ENCODE measurements at regions of chr14 and their contacts with region 1.

Region 1: GRCh38 chr14:100709289-100710284 is 17.1 kb upstream of the DLK1 start:
- DNase-seq: peak; percentile 64 to 82 (median 74)
- H3K4me3 ChIP-seq: no peak overlapping the region
- H3K27ac ChIP-seq: peak overlapping the region; percentile 91 to 98
- H3K4me1 ChIP-seq: peaks cover 23% of the 10 kb centered on the region
- H3K27me3 ChIP-seq: no peaks in the 10 kb centered on the region
- CTCF ChIP-seq: peak in 2 of 3 donors; percentile 29 to 84
- EP300 ChIP-seq: no peak
- POLR2A ChIP-seq: peak; percentile 18

Region 2: DNA sequence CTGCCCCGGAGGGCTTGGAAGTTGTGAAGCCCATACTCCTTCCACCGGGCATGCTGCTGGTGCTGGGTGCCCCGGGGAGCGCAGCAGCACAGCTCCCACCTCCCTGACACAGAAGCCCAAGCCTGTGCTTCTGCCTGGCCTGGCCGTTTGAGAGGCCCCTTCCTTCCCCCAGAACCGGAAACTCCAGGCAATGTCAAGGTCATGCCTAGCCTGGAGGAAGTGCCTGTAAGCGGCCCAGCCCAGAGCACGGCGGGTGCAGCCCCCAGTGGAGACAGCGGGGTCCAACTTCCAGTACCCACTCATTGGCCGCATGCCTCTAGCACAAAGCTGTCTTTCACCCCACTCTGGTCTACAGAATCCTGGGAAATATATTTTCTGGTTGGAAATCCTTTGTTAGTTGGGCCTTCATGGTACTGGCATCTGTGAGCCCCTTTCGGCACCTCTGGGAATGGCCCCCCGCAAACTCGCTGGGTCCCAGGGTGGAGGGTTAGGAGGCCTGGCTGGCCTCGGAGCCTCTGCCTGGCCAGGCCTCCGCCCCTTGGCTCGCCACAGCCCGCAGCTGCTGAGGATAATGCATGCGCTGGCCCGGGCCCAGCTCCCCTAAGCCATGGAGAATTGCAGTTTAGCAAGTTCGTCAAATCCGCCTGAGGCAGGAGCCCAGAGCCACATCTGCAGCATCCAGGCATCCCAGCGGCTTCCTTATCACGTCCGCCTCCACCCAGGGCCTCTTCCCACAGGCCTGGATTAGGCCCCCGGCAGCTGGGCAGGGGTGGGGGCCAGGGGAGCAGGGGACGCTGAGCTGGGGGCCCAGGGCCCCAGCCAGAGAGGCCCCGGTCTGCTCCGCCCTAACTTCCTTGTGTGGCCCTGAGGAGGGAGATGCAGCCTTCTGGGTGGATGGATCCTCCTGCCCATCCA is 31.8 kb before region 1 on chr14:
- intact Hi-C with region 1: loop called in 1 of 4 experiments (anchors 2 kb)
- DNase-seq: peak; percentile 83 to 90 (median 84)
- H3K4me3 ChIP-seq: no peak overlapping the region
- H3K27ac ChIP-seq: peak overlapping the region; percentile 75 to 92
- H3K4me1 ChIP-seq: peaks cover 32% of the 10 kb centered on the region
- H3K27me3 ChIP-seq: no peaks in the 10 kb centered on the region
- CTCF ChIP-seq: no peak
- EP300 ChIP-seq: no peak
- POLR2A ChIP-seq: peak; percentile 23

Region 3: GRCh38 chr14:100736234-100737180 is 26.9 kb after region 1 on chr14:
- intact Hi-C with region 1: no loop called
- DNase-seq: peak in 3 of 5 donors; percentile 12 to 59 (median 36)
- H3K4me3 ChIP-seq: no peak overlapping the region
- H3K27ac ChIP-seq: no peak overlapping the region
- H3K4me1 ChIP-seq: peaks cover 6% of the 10 kb centered on the region
- H3K27me3 ChIP-seq: no peaks in the 10 kb centered on the region
- CTCF ChIP-seq: no peak
- EP300 ChIP-seq: no peak
- POLR2A ChIP-seq: no peak

Region 4: DNA sequence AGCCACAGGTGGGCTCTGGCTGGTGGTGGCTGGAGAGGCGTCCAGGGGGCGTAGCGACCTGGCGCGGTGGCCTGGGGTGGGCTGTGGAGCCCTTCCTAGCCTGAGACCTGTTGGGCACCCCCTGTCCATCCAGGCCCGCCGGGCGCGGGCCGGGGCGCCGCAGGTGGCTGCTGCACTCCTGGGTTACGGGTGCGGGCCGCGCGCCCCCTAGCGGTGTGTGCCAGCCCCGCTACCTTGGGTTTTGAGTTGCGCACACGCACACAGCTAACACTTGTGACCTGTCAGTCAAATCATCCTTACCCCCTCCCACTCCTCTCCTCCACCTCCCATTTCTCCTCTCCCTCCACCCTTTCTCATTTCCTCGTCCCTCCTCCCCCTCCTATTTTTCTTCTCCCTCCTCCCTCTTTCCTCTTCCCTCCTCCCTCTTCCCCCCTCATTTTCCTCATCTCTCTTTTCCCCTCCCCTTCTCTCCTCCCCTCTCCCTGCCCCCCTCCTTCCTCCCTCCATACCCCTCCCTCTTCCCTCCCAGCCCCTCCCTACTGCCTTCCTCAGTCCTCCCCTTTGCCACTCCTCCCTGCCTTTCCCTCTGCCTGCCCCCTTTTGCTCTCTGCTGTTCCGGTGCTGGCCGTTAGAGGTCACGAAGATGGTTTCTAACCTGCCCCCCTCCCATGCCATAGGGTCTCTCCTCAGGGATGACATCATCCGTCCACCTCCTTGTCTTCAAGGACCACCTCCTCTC is 118.6 kb after region 1 on chr14:
- intact Hi-C with region 1: loop called in 1 of 4 experiments (anchors 5 kb)
- DNase-seq: peak; percentile 48 to 80 (median 59)
- H3K4me3 ChIP-seq: peak overlapping the region; percentile 49
- H3K27ac ChIP-seq: peak overlapping the region in 1 of 2 donors; percentile 72
- H3K4me1 ChIP-seq: peaks cover 2% of the 10 kb centered on the region
- H3K27me3 ChIP-seq: no peaks in the 10 kb centered on the region
- CTCF ChIP-seq: peak; percentile 20 to 63 (median 50)
- EP300 ChIP-seq: no peak
- POLR2A ChIP-seq: no peak

Region 5: GRCh38 chr14:100900837-100901390 is 191.3 kb after region 1 on chr14:
- intact Hi-C with region 1: loop called in 1 of 4 experiments (anchors 5 kb)
- DNase-seq: peak in 3 of 5 donors; percentile 52 to 74 (median 53)
- H3K4me3 ChIP-seq: no peak overlapping the region
- H3K27ac ChIP-seq: no peak overlapping the region
- H3K4me1 ChIP-seq: peaks cover 4% of the 10 kb centered on the region
- H3K27me3 ChIP-seq: no peaks in the 10 kb centered on the region
- CTCF ChIP-seq: peak in 1 of 3 donors; percentile 28
- EP300 ChIP-seq: no peak
- POLR2A ChIP-seq: no peak

Measured in ovary (tissue), 10 donors.